Activated CD4-positive, alpha-beta T cell treated with anti-CD3 and anti-CD28 coated beads, Interleukin-2, amount 10 ng/mL, durations not matched to agents 24 days and 14 days (primary cell): ENCODE measurements at regions of chr5 and their contacts with region 1.

Region 1: GRCh38 chr5:177390363-177391300 is 6.4 kb downstream of the SLC34A1 start:
- DNase-seq: peak; percentile 96
- H3K4me3 Mint-ChIP-seq: no peak overlapping the region
- H3K27ac Mint-ChIP-seq: peak overlapping the region; percentile 73
- H3K4me1 Mint-ChIP-seq: peaks cover 33% of the 10 kb centered on the region
- H3K27me3 Mint-ChIP-seq: peaks cover 7% of the 10 kb centered on the region

Region 2: DNA sequence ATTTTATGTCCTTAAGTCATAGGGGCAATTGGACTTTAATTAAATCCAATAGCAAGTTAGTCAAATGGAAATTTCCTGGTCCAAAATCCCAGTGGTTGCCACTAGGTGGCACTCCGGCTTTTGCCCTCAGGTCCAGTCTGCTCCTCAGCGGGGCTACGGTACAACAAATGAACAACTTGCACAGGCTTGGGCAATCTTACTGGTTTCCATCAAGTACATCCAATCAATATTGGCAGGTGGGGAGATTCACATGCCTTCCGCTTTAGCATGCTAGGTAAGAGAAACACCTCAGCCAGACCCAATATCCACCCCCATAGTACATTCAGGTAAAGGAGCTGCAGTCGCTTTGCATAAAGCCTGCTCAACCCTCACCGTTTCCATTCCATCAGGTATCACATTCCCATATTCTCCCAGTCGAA is 72.7 kb before region 1 on chr5:
- intact Hi-C with region 1: loop called (anchors 1 kb)
- DNase-seq: peak; percentile 92
- H3K4me3 Mint-ChIP-seq: no peak overlapping the region
- H3K27ac Mint-ChIP-seq: no peak overlapping the region
- H3K4me1 Mint-ChIP-seq: peaks cover 24% of the 10 kb centered on the region
- H3K27me3 Mint-ChIP-seq: no peaks in the 10 kb centered on the region

Region 3: GRCh38 chr5:177362610-177363507 is 27.8 kb before region 1 on chr5:
- intact Hi-C with region 1: loop called (anchors 2 kb)
- DNase-seq: peak; percentile 87
- H3K4me3 Mint-ChIP-seq: peak overlapping the region; percentile 81
- H3K27ac Mint-ChIP-seq: peak overlapping the region; percentile 72
- H3K4me1 Mint-ChIP-seq: peaks cover 59% of the 10 kb centered on the region
- H3K27me3 Mint-ChIP-seq: no peaks in the 10 kb centered on the region

Region 4: GRCh38 chr5:177403792-177404640 is 13.4 kb after region 1 on chr5:
- intact Hi-C with region 1: loop called (anchors 1 kb)
- DNase-seq: peak; percentile 95
- H3K4me3 Mint-ChIP-seq: peak overlapping the region; percentile 88
- H3K27ac Mint-ChIP-seq: peak overlapping the region; percentile 67
- H3K4me1 Mint-ChIP-seq: peaks cover 17% of the 10 kb centered on the region
- H3K27me3 Mint-ChIP-seq: peaks cover 33% of the 10 kb centered on the region

Region 5: DNA sequence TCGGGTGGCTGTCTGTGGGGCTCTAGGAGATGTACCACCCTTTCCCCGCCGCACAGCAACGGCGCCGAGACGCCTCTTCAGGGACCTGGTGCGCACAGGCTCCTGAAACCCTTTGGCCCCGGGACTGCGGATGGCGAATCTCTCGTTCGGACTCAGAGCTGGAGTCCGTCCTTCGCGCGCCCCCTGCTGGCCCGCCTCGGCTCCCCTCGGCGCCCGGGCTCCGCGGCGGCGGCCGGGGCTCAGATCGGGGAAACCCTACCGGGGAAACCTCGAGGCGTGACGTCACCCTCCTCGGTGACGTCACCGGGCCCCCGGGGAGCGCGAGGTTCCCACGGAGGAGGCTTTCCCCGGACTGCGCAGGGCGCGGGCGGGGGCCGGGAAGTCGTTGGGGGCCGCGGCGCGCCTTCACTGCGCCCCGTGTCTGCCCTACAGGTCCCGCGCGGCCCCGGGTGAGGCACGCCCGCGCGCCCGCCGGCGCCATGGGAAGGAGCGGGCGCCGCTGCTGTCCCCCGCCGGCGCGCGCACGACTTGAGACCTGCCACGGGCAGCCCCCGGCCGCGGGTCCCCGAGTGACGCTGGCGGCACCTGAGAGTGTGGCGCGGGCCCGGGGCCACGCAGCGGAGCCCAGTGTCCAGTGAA is 63.9 kb after region 1 on chr5:
- intact Hi-C with region 1: loop called (anchors 1 kb)
- DNase-seq: peak; percentile 98
- H3K4me3 Mint-ChIP-seq: peak overlapping the region; percentile 85
- H3K27ac Mint-ChIP-seq: no peak overlapping the region
- H3K4me1 Mint-ChIP-seq: peaks cover 10% of the 10 kb centered on the region
- H3K27me3 Mint-ChIP-seq: peaks cover 18% of the 10 kb centered on the region